Ascending aorta (tissue), 2 donors: ENCODE measurements at regions of chr2 and their contacts with region 1.

Region 1: GRCh38 chr2:239814116-239814860 is 210.9 kb downstream of the NDUFA10 start:
- DNase-seq: peak in 1 of 2 donors; percentile 75
- H3K4me3 ChIP-seq: peak overlapping the region in 1 of 2 donors; percentile 48
- H3K27ac ChIP-seq: peak overlapping the region; percentile 91 to 96
- H3K4me1 ChIP-seq: peaks cover 22 to 50% of the 10 kb centered on the region in 2 donors
- H3K27me3 ChIP-seq: no peaks in the 10 kb centered on the region
- CTCF ChIP-seq: no peak

Region 2: DNA sequence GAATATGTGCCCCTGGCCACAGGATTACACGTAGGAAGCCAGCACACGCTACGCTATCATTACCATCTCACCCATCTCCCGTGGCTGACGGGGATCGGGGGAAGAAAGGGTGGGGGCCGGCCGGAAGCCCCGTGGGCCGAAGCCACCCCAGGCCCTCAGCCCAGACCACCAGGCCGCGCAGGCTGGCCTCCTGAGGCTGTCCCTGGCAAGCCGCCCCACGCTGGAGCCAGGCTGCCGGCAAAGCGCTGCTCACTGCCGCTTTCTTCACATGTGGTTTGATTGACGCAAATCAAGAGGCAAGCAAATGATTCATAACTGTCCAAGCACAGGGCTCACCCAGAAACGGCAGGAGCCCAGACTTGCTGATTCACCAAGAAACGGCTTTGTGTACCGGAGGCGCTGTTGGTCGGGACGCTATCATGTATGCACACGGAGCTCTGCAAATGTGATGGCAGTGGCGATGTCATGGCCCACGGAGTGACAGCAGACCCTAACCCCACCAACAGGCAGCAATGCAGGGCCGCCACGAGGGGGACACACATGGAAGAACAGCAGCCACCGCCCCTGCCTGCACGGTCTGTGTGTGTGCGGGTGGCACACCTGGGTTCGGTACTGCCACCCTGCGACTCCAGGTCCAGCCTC is 539.1 kb before region 1 on chr2:
- intact Hi-C with region 1: loop called (anchors 10 kb)
- DNase-seq: peak; percentile 82 to 96
- H3K4me3 ChIP-seq: peak overlapping the region; percentile 18 to 50
- H3K27ac ChIP-seq: peak overlapping the region; percentile 68 to 81
- H3K4me1 ChIP-seq: peaks cover 13 to 32% of the 10 kb centered on the region in 2 donors
- H3K27me3 ChIP-seq: no peaks in the 10 kb centered on the region
- CTCF ChIP-seq: peak in 1 of 3 experiments; percentile 14

Region 3: GRCh38 chr2:239630618-239631286 is 183.5 kb before region 1 on chr2:
- intact Hi-C with region 1: loop called (anchors 5 kb)
- DNase-seq: peak in 1 of 2 donors; percentile 86
- H3K4me3 ChIP-seq: peak overlapping the region; percentile 14 to 31
- H3K27ac ChIP-seq: peak overlapping the region; percentile 26 to 71
- H3K4me1 ChIP-seq: peaks cover 0 to 6% of the 10 kb centered on the region in 2 donors
- H3K27me3 ChIP-seq: no peaks in the 10 kb centered on the region
- CTCF ChIP-seq: no peak

Region 4: GRCh38 chr2:239756790-239757760 is 57.2 kb before region 1 on chr2:
- intact Hi-C with region 1: loop called (anchors 1 kb)
- DNase-seq: peak in 1 of 2 donors; percentile 81
- H3K4me3 ChIP-seq: no peak overlapping the region
- H3K27ac ChIP-seq: peak overlapping the region; percentile 89 to 93
- H3K4me1 ChIP-seq: peaks cover 15 to 42% of the 10 kb centered on the region in 2 donors
- H3K27me3 ChIP-seq: no peaks in the 10 kb centered on the region
- CTCF ChIP-seq: no peak

Region 5: DNA sequence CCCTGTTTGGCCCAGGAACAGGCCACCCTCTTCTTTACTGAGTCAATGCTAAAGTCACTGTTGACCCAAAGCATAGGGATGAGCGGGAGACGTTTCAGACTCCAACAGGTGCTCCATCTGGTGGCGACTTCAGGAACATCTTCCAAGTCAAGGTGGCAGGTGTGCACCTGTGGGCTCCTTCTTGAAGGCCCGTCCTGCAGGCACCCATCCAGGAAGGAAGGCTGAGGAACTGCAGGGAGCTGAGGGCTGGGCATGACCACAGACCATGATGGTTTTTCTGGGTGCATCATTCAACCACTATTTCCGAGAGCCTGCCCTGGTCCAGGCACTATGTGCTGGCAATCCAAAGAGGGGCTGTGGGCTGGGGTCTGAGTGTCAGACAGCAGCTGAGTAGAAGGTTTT is 68.0 kb after region 1 on chr2:
- intact Hi-C with region 1: loop called (anchors 1 kb)
- DNase-seq: peak in 1 of 2 donors; percentile 75
- H3K4me3 ChIP-seq: no peak overlapping the region
- H3K27ac ChIP-seq: peak overlapping the region; percentile 75 to 86
- H3K4me1 ChIP-seq: peaks cover 4 to 14% of the 10 kb centered on the region in 2 donors
- H3K27me3 ChIP-seq: no peaks in the 10 kb centered on the region
- CTCF ChIP-seq: peak; percentile 70 to 79 (median 71)

Region 6: GRCh38 chr2:240250985-240251847 is 436.9 kb after region 1 on chr2:
- intact Hi-C with region 1: loop called (anchors 5 kb)
- DNase-seq: peak; percentile 93 to 98
- H3K4me3 ChIP-seq: peak overlapping the region in 1 of 2 donors; percentile 19
- H3K27ac ChIP-seq: peak overlapping the region; percentile 87 to 93
- H3K4me1 ChIP-seq: peaks cover 14 to 22% of the 10 kb centered on the region in 2 donors
- H3K27me3 ChIP-seq: no peaks in the 10 kb centered on the region
- CTCF ChIP-seq: no peak

Region 7: DNA sequence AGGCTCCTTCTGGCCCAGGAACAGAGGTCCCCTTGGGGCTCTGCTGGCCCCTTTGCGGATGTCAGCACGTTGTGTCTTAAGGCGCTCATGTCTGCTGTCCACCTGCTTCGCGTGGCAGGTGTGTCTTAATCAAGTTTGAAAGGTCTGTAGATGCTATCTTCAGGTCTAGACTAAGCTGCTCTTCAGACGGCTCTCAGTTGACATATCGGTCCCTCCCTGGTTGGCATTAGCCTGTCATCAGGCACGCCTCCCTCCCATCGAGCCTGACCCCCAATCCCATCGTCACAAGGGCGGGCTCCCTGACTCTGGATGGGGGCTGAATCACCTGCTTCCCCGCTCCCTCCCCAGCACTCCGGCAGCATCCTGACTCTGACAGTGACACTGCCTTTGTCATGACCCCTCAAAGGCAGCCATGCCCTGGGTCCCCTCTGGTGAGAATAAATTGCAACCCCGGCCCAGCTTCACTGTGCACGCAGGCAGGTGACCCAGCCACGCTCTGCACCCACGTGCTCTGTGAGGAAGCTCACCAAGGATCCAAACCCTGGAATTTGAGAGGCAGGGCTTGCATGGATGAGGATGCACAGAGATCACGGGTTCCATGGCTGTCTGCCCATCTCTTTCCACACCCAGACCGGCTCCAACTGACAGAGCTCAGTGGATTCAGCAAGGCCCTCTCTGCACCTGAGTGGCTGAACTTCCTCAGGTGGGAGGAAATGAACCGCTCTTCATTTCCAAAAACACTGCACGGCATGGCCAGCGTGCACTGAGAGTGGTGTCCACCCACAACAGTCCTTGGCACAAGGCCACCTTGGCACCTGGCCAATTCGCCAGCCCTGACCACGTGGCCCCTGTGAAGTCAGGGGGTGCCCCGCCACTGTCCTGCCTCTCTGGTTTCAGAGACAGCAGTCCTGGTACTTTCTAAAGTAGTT is 511.0 kb after region 1 on chr2:
- intact Hi-C with region 1: no loop called
- DNase-seq: peak in 1 of 2 donors; percentile 56
- H3K4me3 ChIP-seq: no peak overlapping the region
- H3K27ac ChIP-seq: no peak overlapping the region
- H3K4me1 ChIP-seq: no peaks in the 10 kb centered on the region
- H3K27me3 ChIP-seq: no peaks in the 10 kb centered on the region
- CTCF ChIP-seq: no peak

Region 8: DNA sequence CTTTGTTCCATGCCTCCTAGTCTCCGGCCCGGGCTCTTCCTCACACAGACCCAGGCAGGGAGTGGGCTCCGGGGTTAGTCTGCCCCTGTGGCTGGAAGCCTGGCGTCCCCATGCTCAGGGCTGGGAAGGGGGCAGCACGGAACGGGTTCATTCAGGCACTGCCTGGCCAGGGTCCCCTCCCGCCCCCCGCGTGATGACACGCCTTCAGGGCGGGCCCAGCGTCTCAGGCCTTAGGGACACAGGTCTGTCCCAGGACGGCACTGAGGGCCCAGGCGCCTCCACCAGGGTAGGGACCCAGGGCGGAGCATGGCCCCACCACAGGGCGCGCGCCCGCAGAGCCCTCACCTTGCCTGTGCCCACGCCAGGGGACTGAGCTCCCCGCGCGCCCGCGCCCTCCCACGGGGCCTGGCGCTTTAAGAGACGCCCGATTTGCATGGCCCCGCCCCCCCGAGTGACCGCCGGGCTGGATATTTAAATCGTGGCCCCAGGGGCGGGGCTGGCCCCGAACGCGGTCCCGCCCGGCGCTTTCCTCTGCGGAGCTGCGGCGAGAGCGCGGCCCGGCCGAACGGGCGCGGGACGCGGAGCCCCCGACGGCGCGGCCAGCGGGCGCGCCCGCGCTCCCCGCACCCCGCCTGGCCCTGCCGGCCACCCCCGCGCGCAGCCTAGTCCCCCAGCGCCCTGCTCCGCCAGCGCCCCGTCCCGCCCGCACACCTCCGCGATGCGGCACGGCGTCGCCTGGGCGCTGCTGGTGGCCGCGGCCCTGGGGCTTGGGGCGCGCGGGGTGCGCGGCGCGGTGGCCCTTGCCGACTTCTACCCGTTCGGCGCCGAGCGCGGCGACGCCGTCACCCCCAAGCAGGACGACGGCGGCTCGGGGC is 1184.1 kb after region 1 on chr2 and contains the start of gene SNED1:
- intact Hi-C with region 1: loop called (anchors 10 kb)
- DNase-seq: peak; percentile 54 to 93
- H3K4me3 ChIP-seq: peak within 1 kb of the TSS; percentile 79 to 91
- H3K27ac ChIP-seq: peak within 1 kb of the TSS; percentile 92 to 93
- H3K4me1 ChIP-seq: peaks cover 39 to 55% of the 10 kb centered on the region in 2 donors
- H3K27me3 ChIP-seq: no peaks in the 10 kb centered on the region
- CTCF ChIP-seq: no peak
- total RNA-seq, gene SNED1: 84.3 TPM